ENCODE measurements at regions of chr11 and their contacts with region 1.

Region 1: DNA sequence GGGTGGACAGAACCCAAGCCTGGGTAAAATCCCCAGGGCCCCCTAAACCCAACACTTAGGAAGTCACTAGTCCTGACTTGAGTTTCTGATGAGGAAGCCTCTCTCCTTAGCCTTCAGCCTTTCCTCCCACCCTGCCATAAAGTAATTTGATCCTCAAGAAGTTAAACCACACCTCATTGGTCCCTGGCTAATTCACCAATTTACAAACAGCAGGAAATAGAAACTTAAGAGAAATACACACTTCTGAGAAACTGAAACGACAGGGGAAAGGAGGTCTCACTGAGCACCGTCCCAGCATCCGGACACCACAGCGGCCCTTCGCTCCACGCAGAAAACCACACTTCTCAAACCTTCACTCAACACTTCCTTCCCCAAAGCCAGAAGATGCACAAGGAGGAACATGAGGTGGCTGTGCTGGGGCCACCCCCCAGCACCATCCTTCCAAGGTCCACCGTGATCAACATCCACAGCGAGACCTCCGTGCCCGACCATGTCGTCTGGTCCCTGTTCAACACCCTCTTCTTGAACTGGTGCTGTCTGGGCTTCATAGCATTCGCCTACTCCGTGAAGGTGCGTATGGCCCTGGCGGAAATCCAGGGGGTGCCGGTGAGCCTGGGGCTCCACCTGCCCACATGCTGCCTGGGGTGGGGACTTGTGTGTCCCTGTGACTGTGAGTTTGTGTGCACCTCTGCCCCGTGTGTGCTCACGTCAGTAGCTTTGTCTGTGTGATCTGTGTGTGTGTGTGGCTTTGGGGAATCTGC is at the start of gene IFITM1:
- DNase-seq: peak; percentile 72 to 85 (median 79)
- H3K4me3 ChIP-seq: peak within 1 kb of the TSS; percentile 59 to 91
- H3K4me3 Mint-ChIP-seq: peak within 1 kb of the TSS; percentile 92 to 99 (median 98)
- H3K27ac ChIP-seq: peak within 1 kb of the TSS; percentile 76
- H3K27ac Mint-ChIP-seq: peak within 1 kb of the TSS; percentile 94 to 100 (median 98)
- H3K4me1 ChIP-seq: peaks cover 37% of the 10 kb centered on the region
- H3K4me1 Mint-ChIP-seq: peaks cover 29 to 56% (median 35%) of the 10 kb centered on the region in 4 donors
- H3K27me3 ChIP-seq: no peaks in the 10 kb centered on the region
- H3K27me3 Mint-ChIP-seq: no peaks in the 10 kb centered on the region
- total RNA-seq, gene IFITM1: 119 to 121 TPM

Region 2: DNA sequence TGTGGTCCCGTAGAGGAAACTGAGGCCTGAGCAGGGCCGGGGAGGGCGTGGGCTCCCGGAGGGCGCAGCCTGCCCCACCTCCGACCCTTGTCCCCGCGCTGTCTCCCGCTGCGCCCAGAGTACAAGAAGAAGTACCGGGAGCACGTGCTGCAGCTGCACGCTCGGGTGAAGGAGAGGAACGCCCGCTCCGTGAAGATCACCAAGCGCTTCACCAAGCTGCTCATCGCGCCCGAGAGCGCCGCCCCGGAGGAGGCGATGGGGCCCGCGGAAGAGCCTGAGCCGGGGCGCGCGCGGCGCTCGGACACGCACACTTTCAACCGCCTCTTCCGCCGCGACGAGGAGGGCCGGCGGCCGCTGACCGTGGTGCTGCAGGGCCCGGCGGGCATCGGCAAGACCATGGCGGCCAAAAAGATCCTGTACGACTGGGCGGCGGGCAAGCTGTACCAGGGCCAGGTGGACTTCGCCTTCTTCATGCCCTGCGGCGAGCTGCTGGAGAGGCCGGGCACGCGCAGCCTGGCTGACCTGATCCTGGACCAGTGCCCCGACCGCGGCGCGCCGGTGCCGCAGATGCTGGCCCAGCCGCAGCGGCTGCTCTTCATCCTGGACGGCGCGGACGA is 33.9 kb before region 1 on chr11:
- CTCF ChIA-PET with region 1: interaction called, 14 read pairs
- POLR2A ChIA-PET with region 1: interaction called, 47 read pairs
- intact Hi-C with region 1: loop called (anchors 2 kb)
- DNase-seq: peak in 4 of 5 donors; percentile 55 to 61 (median 57)
- H3K4me3 ChIP-seq: peak overlapping the region in 1 of 2 donors; percentile 59
- H3K4me3 Mint-ChIP-seq: peak overlapping the region; percentile 84 to 91 (median 88)
- H3K27ac ChIP-seq: no peak overlapping the region
- H3K27ac Mint-ChIP-seq: peak overlapping the region in 4 of 7 donors; percentile 70 to 92 (median 84)
- H3K4me1 ChIP-seq: peaks cover 60% of the 10 kb centered on the region
- H3K4me1 Mint-ChIP-seq: peaks cover 30 to 61% (median 46%) of the 10 kb centered on the region in 4 donors
- H3K27me3 ChIP-seq: no peaks in the 10 kb centered on the region
- H3K27me3 Mint-ChIP-seq: no peaks in the 10 kb centered on the region

Region 3: DNA sequence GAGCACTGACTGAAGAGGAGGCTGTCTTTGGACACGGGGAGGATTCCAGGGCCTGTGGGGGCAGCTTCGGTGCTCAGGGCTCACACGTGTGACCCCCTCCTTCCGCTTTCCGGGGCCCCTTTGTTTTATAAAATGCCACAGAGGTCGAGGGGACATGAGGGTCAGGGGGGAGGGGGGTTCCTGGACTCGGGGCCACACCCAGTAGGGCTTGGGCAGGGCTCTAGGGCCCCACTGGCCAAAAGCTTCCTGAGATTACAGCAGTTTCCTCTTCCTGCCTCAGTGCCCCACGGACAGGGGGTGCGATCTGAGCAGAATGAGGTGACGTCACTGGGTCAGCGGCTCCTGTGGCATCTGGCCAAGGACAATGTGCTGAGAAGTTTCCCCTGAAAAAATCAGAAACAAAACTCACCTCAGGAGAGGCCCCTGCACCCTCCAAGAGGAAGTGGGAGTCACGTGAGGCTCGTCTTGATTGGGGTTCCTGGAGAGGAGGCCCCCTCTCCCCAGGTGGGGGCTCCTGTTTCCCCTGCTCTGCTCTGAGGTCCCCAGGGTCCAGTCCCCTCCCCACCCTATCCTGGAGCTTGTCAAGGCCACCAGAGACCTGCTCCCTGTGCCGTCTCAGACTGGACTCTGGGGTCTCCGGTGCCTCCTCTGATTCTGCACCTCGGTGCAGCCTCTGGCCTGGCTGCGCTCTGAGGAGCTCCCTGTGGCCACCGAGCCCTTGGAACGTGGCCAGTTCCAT is 13.0 kb after region 1 on chr11:
- CTCF ChIA-PET with region 1: interaction called, 5 read pairs
- POLR2A ChIA-PET with region 1: interaction called, 42 read pairs
- intact Hi-C with region 1: no loop called
- DNase-seq: peak; percentile 67 to 82 (median 68)
- H3K4me3 ChIP-seq: peak overlapping the region in 1 of 2 donors; percentile 37
- H3K4me3 Mint-ChIP-seq: peak overlapping the region; percentile 58 to 84 (median 67)
- H3K27ac ChIP-seq: peak overlapping the region; percentile 76
- H3K27ac Mint-ChIP-seq: peak overlapping the region; percentile 86 to 96 (median 91)
- H3K4me1 ChIP-seq: peaks cover 50% of the 10 kb centered on the region
- H3K4me1 Mint-ChIP-seq: peaks cover 33 to 80% (median 57%) of the 10 kb centered on the region in 4 donors
- H3K27me3 ChIP-seq: no peaks in the 10 kb centered on the region
- H3K27me3 Mint-ChIP-seq: no peaks in the 10 kb centered on the region

Region 4: GRCh38 chr11:363948-364761 is 50.2 kb after region 1 on chr11:
- CTCF ChIA-PET with region 1: interaction called, 34 read pairs
- POLR2A ChIA-PET with region 1: interaction called, 10 read pairs
- intact Hi-C with region 1: no loop called
- DNase-seq: peak; percentile 61 to 76 (median 72)
- H3K4me3 ChIP-seq: no peak overlapping the region
- H3K4me3 Mint-ChIP-seq: peak overlapping the region in 2 of 8 donors; percentile 12 to 51
- H3K27ac ChIP-seq: no peak overlapping the region
- H3K27ac Mint-ChIP-seq: peak overlapping the region in 2 of 7 donors; percentile 7 to 63
- H3K4me1 ChIP-seq: peaks cover 17% of the 10 kb centered on the region
- H3K4me1 Mint-ChIP-seq: peaks cover 7 to 22% (median 19%) of the 10 kb centered on the region in 4 donors
- H3K27me3 ChIP-seq: peaks cover 22% of the 10 kb centered on the region
- H3K27me3 Mint-ChIP-seq: peaks cover 18 to 20% of the 10 kb centered on the region in 2 donors

Region 5: GRCh38 chr11:416757-417621 is 103.0 kb after region 1 on chr11:
- CTCF ChIA-PET with region 1: no interaction called
- POLR2A ChIA-PET with region 1: interaction called, 38 read pairs
- intact Hi-C with region 1: no loop called
- DNase-seq: peak in 4 of 5 donors; percentile 38 to 54 (median 45)
- H3K4me3 ChIP-seq: peak overlapping the region; percentile 17 to 73
- H3K4me3 Mint-ChIP-seq: peak overlapping the region; percentile 26 to 100 (median 96)
- H3K27ac ChIP-seq: peak overlapping the region; percentile 61
- H3K27ac Mint-ChIP-seq: peak overlapping the region in 4 of 7 donors; percentile 70 to 92 (median 83)
- H3K4me1 ChIP-seq: peaks cover 31% of the 10 kb centered on the region
- H3K4me1 Mint-ChIP-seq: peaks cover 4 to 42% (median 17%) of the 10 kb centered on the region in 4 donors
- H3K27me3 ChIP-seq: no peaks in the 10 kb centered on the region
- H3K27me3 Mint-ChIP-seq: no peaks in the 10 kb centered on the region

Region 6: GRCh38 chr11:497565-498296 is 183.8 kb after region 1 on chr11:
- CTCF ChIA-PET with region 1: no interaction called
- POLR2A ChIA-PET with region 1: no interaction called
- intact Hi-C with region 1: no loop called
- DNase-seq: no peak
- H3K4me3 ChIP-seq: no peak overlapping the region
- H3K4me3 Mint-ChIP-seq: no peak overlapping the region
- H3K27ac ChIP-seq: no peak overlapping the region
- H3K27ac Mint-ChIP-seq: peak overlapping the region in 4 of 7 donors; percentile 15 to 81 (median 42)
- H3K4me1 ChIP-seq: no peaks in the 10 kb centered on the region
- H3K4me1 Mint-ChIP-seq: peaks cover 0 to 12% (median 5%) of the 10 kb centered on the region in 4 donors
- H3K27me3 ChIP-seq: no peaks in the 10 kb centered on the region
- H3K27me3 Mint-ChIP-seq: no peaks in the 10 kb centered on the region